ENCODE measurements at regions of chr3 and their contacts with region 1.

Region 1: DNA sequence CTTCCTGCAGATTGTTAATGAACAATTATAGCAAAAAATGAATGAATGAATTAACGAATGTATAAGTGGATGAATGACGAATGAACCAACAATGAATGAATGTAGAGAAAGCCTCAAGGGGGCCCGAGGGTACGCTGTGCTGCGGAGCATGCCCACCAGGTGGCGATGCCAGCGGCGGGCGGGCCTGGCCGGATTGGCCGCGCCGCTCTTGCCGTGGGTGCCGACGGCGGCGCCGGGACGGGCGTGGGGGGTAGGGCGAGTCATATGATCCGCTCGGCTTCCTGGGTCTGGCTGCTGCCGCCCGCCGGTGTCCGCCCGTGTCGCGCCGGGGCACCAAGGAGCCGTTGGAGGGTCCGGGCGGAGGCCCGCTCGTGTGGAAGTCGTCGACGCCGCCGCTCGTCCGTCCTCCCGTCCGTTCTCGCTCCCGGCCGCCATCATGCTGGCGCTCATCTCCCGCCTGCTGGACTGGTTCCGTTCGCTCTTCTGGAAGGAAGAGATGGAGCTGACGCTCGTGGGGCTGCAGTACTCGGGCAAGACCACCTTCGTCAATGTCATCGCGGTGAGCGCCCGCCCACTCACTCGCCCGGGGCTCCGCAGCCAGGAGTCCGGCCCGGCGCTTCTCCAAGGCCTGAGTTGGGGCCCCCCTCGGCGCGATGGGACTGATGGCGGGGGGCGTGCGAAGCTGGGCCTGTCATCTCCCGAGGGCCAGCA is at the start of gene ARL8B:
- DNase-seq: peak; percentile 90 to 94
- ATAC-seq: peak; percentile 91 to 100 (median 95)
- H3K4me3 ChIP-seq: peak within 1 kb of the TSS; percentile 85
- H3K4me3 Mint-ChIP-seq: peak within 1 kb of the TSS; percentile 84
- H3K27ac ChIP-seq: peak within 1 kb of the TSS; percentile 90
- H3K27ac Mint-ChIP-seq: peak within 1 kb of the TSS; percentile 88 to 90
- H3K4me1 ChIP-seq: peaks cover 25% of the 10 kb centered on the region
- H3K4me1 Mint-ChIP-seq: peaks cover 38 to 44% of the 10 kb centered on the region in 2 donors
- H3K27me3 ChIP-seq: no peaks in the 10 kb centered on the region
- H3K27me3 Mint-ChIP-seq: no peaks in the 10 kb centered on the region
- CTCF ChIP-seq: peak; percentile 99
- total RNA-seq, gene ARL8B: 43.3 to 52.7 (median 48.9) TPM

Region 2: DNA sequence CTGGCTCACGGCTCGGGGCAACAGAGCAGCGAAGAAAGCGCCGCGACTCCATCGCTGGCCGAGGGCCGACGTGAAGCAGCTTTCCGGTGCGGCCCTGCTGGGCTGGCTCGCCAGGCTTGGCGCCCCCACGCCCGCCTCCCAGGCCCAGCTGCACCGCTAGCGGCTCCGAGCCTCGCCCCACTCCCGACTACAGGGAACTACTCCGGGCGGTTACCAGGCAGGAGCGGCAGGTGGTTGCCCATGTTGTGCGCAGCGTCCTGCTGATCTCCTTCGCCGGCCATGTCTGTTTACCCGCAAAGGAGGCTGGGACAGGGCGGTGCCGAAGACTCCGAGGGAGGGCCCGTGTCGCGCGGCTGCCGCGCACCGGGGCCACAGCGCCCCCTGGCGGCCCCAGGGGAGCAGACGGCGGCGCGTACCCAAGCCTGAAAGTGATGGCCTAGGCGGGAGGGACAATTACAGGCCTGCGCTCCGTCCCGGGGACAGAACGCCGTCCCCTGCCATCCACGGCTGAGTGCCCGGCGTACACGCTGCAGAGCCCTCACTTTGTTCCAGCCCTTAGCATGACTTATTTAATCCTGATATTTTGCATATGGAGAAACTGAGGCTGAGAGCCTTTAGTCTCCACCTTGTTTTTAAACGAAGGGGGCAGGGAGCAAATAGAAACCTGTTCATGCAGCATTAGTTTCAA is 1942.6 kb before region 1 on chr3 and contains the start of gene CRBN:
- intact Hi-C with region 1: loop called (anchors 10 kb)
- DNase-seq: peak; percentile 89 to 95
- ATAC-seq: peak; percentile 96 to 99 (median 98)
- H3K4me3 ChIP-seq: peak within 1 kb of the TSS; percentile 62
- H3K4me3 Mint-ChIP-seq: peak within 1 kb of the TSS; percentile 95
- H3K27ac ChIP-seq: peak within 1 kb of the TSS; percentile 64
- H3K27ac Mint-ChIP-seq: peak within 1 kb of the TSS; percentile 90 to 92
- H3K4me1 ChIP-seq: peaks cover 18% of the 10 kb centered on the region
- H3K4me1 Mint-ChIP-seq: peaks cover 42 to 43% of the 10 kb centered on the region in 2 donors
- H3K27me3 ChIP-seq: no peaks in the 10 kb centered on the region
- H3K27me3 Mint-ChIP-seq: no peaks in the 10 kb centered on the region
- CTCF ChIP-seq: peak; percentile 99
- total RNA-seq, gene CRBN: 126 to 166 (median 139) TPM

Region 3: DNA sequence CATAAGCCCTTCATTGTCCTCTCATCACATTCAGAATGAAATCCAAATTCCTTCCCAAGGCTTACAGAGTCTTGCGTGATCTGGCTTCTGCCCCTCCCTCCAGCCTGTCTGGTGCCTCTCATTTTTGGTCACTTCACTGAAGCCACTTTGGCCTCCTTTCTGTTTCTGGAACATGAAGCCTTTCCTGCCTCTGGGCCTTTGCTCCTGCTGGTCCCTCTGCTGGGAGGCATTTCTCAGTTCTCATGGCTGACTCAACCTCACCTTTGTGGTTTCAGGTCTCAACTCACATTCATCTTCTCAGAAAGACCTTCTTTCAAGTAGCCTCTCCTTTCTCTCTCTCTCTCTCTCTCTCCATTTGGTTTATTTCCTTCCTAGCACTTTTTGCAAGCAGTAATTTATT is 186.8 kb before region 1 on chr3:
- intact Hi-C with region 1: no loop called
- DNase-seq: no peak
- ATAC-seq: no peak
- H3K4me3 ChIP-seq: no peak overlapping the region
- H3K4me3 Mint-ChIP-seq: no peak overlapping the region
- H3K27ac ChIP-seq: no peak overlapping the region
- H3K27ac Mint-ChIP-seq: no peak overlapping the region
- H3K4me1 ChIP-seq: no peaks in the 10 kb centered on the region
- H3K4me1 Mint-ChIP-seq: no peaks in the 10 kb centered on the region
- H3K27me3 ChIP-seq: no peaks in the 10 kb centered on the region
- H3K27me3 Mint-ChIP-seq: no peaks in the 10 kb centered on the region
- CTCF ChIP-seq: no peak

Region 4: DNA sequence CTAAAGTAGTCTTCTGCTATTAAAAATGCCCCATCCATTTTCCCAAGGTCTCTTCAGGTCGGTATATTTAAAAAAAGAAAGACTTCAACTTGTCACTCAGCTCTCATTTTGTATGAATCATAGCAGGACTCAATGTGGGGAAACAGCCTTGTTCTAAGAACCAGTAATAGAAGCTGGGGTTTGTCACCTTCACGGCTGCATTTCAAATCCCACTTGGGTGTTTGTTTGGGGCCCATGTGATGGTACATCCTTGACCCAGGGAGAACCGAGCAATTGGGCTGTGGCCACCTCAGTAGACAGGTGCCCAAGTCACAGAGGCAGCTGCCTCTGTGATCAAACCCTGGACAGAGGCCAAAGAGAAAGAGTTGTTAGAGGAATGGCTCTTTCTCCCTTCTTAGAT is 70.4 kb before region 1 on chr3:
- intact Hi-C with region 1: loop called (anchors 2 kb)
- DNase-seq: no peak
- ATAC-seq: peak; percentile 72 to 88 (median 87)
- H3K4me3 ChIP-seq: no peak overlapping the region
- H3K4me3 Mint-ChIP-seq: peak overlapping the region; percentile 2
- H3K27ac ChIP-seq: no peak overlapping the region
- H3K27ac Mint-ChIP-seq: peak overlapping the region; percentile 79 to 80
- H3K4me1 ChIP-seq: peaks cover 39% of the 10 kb centered on the region
- H3K4me1 Mint-ChIP-seq: peaks cover 28 to 43% of the 10 kb centered on the region in 2 donors
- H3K27me3 ChIP-seq: no peaks in the 10 kb centered on the region
- H3K27me3 Mint-ChIP-seq: no peaks in the 10 kb centered on the region
- CTCF ChIP-seq: no peak

Region 5: GRCh38 chr3:5187156-5187919 is 65.2 kb after region 1 on chr3 and contains the start of gene EDEM1:
- intact Hi-C with region 1: loop called (anchors 1 kb)
- DNase-seq: peak; percentile 95 to 97
- ATAC-seq: peak; percentile 91 to 98 (median 93)
- H3K4me3 ChIP-seq: peak within 1 kb of the TSS; percentile 96
- H3K4me3 Mint-ChIP-seq: peak within 1 kb of the TSS; percentile 98
- H3K27ac ChIP-seq: peak within 1 kb of the TSS; percentile 96
- H3K27ac Mint-ChIP-seq: peak within 1 kb of the TSS; percentile 91 to 93
- H3K4me1 ChIP-seq: peaks cover 25% of the 10 kb centered on the region
- H3K4me1 Mint-ChIP-seq: peaks cover 38 to 42% of the 10 kb centered on the region in 2 donors
- H3K27me3 ChIP-seq: no peaks in the 10 kb centered on the region
- H3K27me3 Mint-ChIP-seq: no peaks in the 10 kb centered on the region
- CTCF ChIP-seq: no peak
- total RNA-seq, gene EDEM1: 55.3 to 64.2 (median 59.9) TPM

Region 6: GRCh38 chr3:5197470-5198312 is 75.5 kb after region 1 on chr3:
- intact Hi-C with region 1: loop called (anchors 2 kb)
- DNase-seq: peak in 1 of 2 donors; percentile 77
- ATAC-seq: peak; percentile 41 to 69 (median 52)
- H3K4me3 ChIP-seq: no peak overlapping the region
- H3K4me3 Mint-ChIP-seq: peak overlapping the region; percentile 71
- H3K27ac ChIP-seq: peak overlapping the region; percentile 71
- H3K27ac Mint-ChIP-seq: peak overlapping the region; percentile 83 to 92
- H3K4me1 ChIP-seq: peaks cover 40% of the 10 kb centered on the region
- H3K4me1 Mint-ChIP-seq: peaks cover 58 to 63% of the 10 kb centered on the region in 2 donors
- H3K27me3 ChIP-seq: no peaks in the 10 kb centered on the region
- H3K27me3 Mint-ChIP-seq: no peaks in the 10 kb centered on the region
- CTCF ChIP-seq: no peak

Measured in natural killer cell (primary cell).